Prostate gland (tissue), 2 donors: ENCODE measurements at regions of chr10 and their contacts with region 1.

Region 1: DNA sequence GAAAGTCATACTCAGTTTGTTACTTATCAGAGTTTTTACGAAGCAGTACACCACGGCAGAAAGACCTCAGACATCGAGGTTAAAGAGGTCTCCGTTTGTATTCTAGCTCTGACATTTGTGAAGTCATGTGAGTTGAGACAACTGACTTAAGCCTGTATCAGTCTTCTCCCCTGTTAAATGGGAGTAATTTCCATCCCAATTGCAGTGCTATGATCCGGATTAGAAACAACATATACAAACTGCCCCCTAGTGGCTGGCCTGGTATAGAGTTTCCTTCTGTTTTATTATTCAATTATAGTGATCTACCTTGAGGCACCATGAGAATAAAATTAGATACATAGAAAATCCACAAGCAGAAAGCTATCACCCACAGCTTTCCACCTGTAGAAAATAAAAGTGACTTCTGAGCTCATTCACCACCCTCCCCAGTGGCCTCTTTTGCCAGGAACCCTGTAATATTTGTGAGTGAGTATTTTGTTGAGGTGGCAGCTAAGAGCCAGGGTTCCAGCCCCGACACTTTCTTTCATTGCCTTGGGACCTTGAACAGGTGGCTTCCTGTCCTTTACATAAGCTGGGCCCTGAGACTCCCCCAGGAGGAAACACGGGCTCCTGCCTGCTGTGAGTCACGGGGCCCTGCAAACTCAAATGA is 607.2 kb upstream of the MGMT start:
- DNase-seq: no peak
- H3K4me3 ChIP-seq: no peak overlapping the region
- H3K27ac ChIP-seq: no peak overlapping the region
- H3K4me1 ChIP-seq: peaks cover 1% of the 10 kb centered on the region
- H3K27me3 ChIP-seq: no peaks in the 10 kb centered on the region
- CTCF ChIP-seq: peak in 3 of 4 experiments; percentile 38 to 59 (median 39)
- POLR2A ChIP-seq: no peak

Region 2: GRCh38 chr10:128631801-128632241 is 228.0 kb before region 1 on chr10:
- intact Hi-C with region 1: loop called (anchors 10 kb)
- DNase-seq: no peak
- H3K4me3 ChIP-seq: no peak overlapping the region
- H3K27ac ChIP-seq: no peak overlapping the region
- H3K4me1 ChIP-seq: no peaks in the 10 kb centered on the region
- H3K27me3 ChIP-seq: no peaks in the 10 kb centered on the region
- CTCF ChIP-seq: peak in 3 of 4 experiments; percentile 24 to 50 (median 47)
- POLR2A ChIP-seq: no peak

Region 3: GRCh38 chr10:128727114-128727513 is 132.7 kb before region 1 on chr10:
- intact Hi-C with region 1: no loop called
- DNase-seq: no peak
- H3K4me3 ChIP-seq: no peak overlapping the region
- H3K27ac ChIP-seq: no peak overlapping the region
- H3K4me1 ChIP-seq: no peaks in the 10 kb centered on the region
- H3K27me3 ChIP-seq: no peaks in the 10 kb centered on the region
- CTCF ChIP-seq: no peak
- POLR2A ChIP-seq: no peak

Region 4: DNA sequence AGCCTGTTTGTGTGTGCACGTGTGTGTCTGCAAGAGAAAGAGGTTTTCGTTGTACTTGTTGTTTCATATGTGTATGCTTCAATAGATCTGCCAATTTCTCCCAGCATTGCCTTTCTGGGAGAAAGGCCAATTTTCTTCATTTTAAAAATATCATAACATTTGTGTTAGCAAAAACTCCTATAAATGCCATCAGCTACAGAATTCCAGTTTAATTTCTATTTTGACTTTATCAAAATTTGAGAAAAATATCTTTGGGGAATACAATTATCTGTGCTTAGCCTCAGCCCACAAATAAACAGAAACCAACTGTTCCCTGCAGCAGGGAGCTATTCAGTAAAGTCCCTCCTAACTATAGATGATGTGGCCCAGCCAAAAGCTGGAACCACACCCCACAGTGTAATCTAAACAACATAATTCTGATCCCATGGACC is 538.9 kb after region 1 on chr10:
- intact Hi-C with region 1: no loop called
- DNase-seq: no peak
- H3K4me3 ChIP-seq: no peak overlapping the region
- H3K27ac ChIP-seq: no peak overlapping the region
- H3K4me1 ChIP-seq: no peaks in the 10 kb centered on the region
- H3K27me3 ChIP-seq: peaks cover 3% of the 10 kb centered on the region
- CTCF ChIP-seq: no peak
- POLR2A ChIP-seq: no peak